HCT116 (cell line): ENCODE measurements at regions of chr16 and their contacts with region 1.

Region 1: GRCh38 chr16:19601083-19601976 is 45.8 kb downstream of the VPS35L start:
- DNase-seq: peak; percentile 36
- ATAC-seq: peak; percentile 67
- H3K4me3 ChIP-seq: no peak overlapping the region
- H3K27ac ChIP-seq: no peak overlapping the region
- H3K4me1 ChIP-seq: no peaks in the 10 kb centered on the region; a peak in 1 of 4 replicates
- H3K27me3 ChIP-seq: no peaks in the 10 kb centered on the region
- CTCF ChIP-seq: peak; percentile 56 to 86 (median 78); a peak in 5 of 6 replicates
- POLR2A ChIP-seq: no peak
- RAD21 ChIP-seq: peak; percentile 91

Region 2: GRCh38 chr16:19419691-19420060 is 181.7 kb before region 1 on chr16:
- CTCF ChIA-PET with region 1: no interaction called
- POLR2A ChIA-PET with region 1: no interaction called
- RAD21 ChIA-PET with region 1: no interaction called
- intact Hi-C with region 1: no loop called
- DNase-seq: peak; percentile 94
- ATAC-seq: peak; percentile 86
- H3K4me3 ChIP-seq: peak overlapping the region in 1 of 2 experiments; percentile 39; a peak in 3 of 4 replicates
- H3K27ac ChIP-seq: peak overlapping the region; percentile 73
- H3K4me1 ChIP-seq: peaks cover 20 to 63% of the 10 kb centered on the region in 2 experiments
- H3K27me3 ChIP-seq: no peaks in the 10 kb centered on the region
- CTCF ChIP-seq: no peak
- POLR2A ChIP-seq: no peak
- RAD21 ChIP-seq: peak; percentile 23; the same call in 1 of the 2 replicates

Region 3: DNA sequence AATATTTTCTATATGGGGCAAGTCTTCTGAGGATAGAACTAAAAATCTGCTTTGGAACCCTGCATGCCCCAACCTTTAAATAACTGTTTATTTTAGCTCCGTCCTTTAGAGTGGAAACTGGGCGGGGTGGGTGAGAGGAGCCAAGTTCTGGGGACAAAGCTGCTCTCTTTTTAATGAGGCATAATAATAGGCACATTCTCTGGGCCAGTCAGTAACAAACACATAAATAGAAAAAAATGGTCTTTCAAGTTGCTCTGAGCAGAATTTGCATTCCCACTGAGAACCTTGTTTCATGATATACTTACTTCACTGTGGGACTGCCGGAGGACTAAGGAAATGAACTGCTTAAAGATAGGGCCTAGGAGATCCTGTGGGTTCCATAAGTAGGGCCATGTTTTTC is 65.1 kb after region 1 on chr16:
- CTCF ChIA-PET with region 1: no interaction called
- POLR2A ChIA-PET with region 1: no interaction called
- RAD21 ChIA-PET with region 1: no interaction called
- intact Hi-C with region 1: loop called (anchors 10 kb)
- DNase-seq: no peak
- ATAC-seq: no peak
- H3K4me3 ChIP-seq: no peak overlapping the region
- H3K27ac ChIP-seq: no peak overlapping the region
- H3K4me1 ChIP-seq: no peaks in the 10 kb centered on the region
- H3K27me3 ChIP-seq: no peaks in the 10 kb centered on the region
- CTCF ChIP-seq: no peak
- POLR2A ChIP-seq: no peak
- RAD21 ChIP-seq: no peak

Region 4: DNA sequence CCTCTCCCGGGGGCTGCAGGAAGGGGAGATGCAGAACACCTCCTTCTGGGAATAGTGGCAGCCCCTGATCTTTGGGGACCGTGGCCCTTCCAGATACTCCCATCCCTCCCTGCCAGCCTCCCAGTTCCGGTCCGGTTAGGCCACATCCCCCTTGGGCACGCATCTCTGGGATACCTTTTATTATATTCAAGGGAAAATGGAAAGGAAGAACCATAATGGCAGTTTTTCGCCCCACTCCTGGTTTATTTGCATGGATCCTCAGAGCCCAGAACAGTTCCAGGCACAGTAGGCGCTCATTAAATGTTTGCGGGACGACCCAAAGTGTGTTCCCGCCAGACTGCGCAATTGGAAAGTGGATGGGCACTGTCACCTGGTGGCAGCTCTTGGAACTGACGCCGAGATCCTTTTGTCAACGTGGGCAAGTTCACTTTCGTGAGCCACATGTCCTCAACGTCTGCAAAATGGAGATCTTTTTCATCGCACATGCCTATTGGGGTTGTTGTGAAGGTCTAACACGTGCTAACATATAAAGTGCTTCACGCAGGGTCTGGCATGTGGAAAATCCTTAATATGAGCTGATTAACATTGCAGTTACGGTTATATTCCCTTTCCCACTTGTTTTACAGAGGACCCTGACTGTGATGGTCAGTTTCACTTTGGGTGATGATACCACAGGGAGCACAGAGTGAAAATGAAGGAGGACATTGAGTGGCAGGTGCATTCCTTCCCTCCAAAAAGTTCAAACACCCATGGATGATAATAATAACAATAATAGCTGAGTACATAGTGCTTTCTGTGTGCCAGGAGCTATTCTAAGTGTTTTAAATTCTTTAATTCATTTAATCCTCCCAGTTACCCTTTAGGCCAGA is 285.0 kb after region 1 on chr16:
- CTCF ChIA-PET with region 1: interaction called, 70 read pairs
- POLR2A ChIA-PET with region 1: interaction called, 3 read pairs
- RAD21 ChIA-PET with region 1: interaction called in 1 of 2 experiments, 6 read pairs
- intact Hi-C with region 1: loop called (anchors 1 kb)
- DNase-seq: peak; percentile 72
- ATAC-seq: peak; percentile 76
- H3K4me3 ChIP-seq: no peak overlapping the region
- H3K27ac ChIP-seq: no peak overlapping the region
- H3K4me1 ChIP-seq: peaks cover 3 to 15% of the 10 kb centered on the region in 2 experiments; a peak in 3 of 4 replicates
- H3K27me3 ChIP-seq: no peaks in the 10 kb centered on the region
- CTCF ChIP-seq: peak; percentile 93 to 100 (median 99)
- POLR2A ChIP-seq: no peak
- RAD21 ChIP-seq: peak; percentile 99